Right cardiac atrium (tissue), 5 donors: ENCODE measurements at regions of chr12 and their contacts with region 1.

Region 1: DNA sequence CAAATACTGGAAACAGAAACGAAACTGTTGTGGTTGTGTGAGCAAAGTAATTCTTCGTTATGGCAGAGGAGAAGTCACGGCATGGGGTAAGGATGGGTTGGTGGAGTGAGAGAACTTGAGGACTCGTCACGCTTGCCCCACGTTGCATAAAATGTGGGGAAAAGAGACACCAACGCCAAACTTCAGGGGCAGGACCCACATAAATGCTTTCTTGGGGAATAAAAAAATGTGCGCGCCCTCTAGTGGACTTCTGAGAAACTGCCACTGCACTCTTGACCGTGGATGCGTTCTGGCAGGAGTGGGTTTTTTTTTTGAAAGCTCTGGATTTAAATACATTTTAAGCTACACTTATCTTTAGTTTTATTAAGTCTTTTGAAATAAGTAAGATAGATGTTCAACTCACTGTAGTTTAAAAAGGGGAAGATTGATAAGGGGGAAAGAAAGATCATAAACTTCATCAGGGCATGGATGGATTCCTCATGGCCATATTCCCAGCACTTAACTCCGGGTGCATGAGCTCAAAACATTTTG is 4.1 kb upstream of the IGF1 start:
- DNase-seq: peak; percentile 67 to 81 (median 69)
- ATAC-seq: peak; percentile 56 to 82
- H3K4me3 ChIP-seq: no peak overlapping the region
- H3K27ac ChIP-seq: no peak overlapping the region
- H3K4me1 ChIP-seq: no peaks in the 10 kb centered on the region
- H3K27me3 ChIP-seq: no peaks in the 10 kb centered on the region

Region 2: GRCh38 chr12:102023343-102023930 is 461.1 kb before region 1 on chr12:
- intact Hi-C with region 1: no loop called
- DNase-seq: no peak
- ATAC-seq: no peak
- H3K4me3 ChIP-seq: no peak overlapping the region
- H3K27ac ChIP-seq: no peak overlapping the region
- H3K4me1 ChIP-seq: no peaks in the 10 kb centered on the region
- H3K27me3 ChIP-seq: no peaks in the 10 kb centered on the region

Region 3: GRCh38 chr12:102169922-102170621 is 314.4 kb before region 1 on chr12:
- intact Hi-C with region 1: loop called in 3 of 4 experiments (anchors 5 to 10 kb)
- DNase-seq: no peak
- ATAC-seq: no peak
- H3K4me3 ChIP-seq: no peak overlapping the region
- H3K27ac ChIP-seq: no peak overlapping the region
- H3K4me1 ChIP-seq: no peaks in the 10 kb centered on the region
- H3K27me3 ChIP-seq: no peaks in the 10 kb centered on the region

Region 4: DNA sequence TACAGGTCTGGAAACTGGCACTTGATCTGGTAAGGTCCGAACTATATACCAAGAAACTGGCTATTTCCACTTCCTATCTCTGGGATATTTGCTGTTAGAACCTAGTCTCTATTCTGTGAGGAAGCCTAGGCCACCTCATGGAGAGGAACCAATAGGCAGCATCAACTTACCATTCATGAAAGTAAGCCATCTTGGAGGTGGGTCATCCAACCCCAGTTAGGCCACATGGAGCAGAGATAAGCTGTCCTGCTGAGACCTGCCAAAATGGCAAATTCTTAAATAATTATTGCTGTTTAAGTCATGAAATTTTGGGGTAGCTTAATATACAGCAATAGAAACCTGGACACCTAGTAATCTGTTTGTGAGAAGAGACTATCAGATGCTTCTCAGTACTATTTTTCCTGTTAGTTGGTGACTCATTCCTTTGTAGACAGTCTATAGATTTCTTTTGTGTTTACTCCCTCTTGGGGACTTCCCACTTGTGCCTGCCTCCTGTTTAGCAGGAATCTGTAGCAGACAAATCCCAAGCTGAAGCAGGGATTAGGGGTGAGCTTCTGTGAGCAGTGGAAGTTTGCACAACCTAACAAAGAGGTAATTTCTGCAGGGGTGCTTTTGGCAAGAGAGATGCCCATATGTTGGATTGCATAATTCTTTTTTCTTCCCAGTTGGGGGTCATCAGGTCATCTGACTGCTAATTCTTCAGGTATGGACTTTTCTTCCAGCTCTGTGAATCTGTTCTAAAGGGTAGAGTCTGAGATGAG is 141.0 kb before region 1 on chr12:
- intact Hi-C with region 1: no loop called
- DNase-seq: no peak
- ATAC-seq: no peak
- H3K4me3 ChIP-seq: no peak overlapping the region
- H3K27ac ChIP-seq: no peak overlapping the region
- H3K4me1 ChIP-seq: no peaks in the 10 kb centered on the region
- H3K27me3 ChIP-seq: no peaks in the 10 kb centered on the region

Region 5: DNA sequence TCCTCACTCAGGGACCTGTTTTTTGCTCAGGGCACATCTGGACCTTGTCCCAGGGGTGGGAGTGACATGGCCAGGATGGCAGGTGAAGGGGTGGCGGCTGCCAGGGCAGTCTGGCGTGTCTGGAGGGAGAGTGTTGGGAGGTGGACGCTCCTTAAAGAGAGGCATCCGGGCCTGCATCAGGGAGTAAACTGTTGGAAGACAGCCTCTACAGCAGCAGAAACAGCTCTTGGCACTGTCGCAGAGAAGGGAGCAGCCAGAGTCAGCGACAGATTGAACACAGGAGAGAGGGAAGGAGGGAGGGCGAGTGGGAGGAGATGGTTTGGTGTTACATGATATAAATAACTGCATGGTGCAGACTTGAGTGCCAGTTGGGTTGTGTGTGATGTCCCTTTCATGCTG is 57.0 kb before region 1 on chr12:
- intact Hi-C with region 1: no loop called
- DNase-seq: peak; percentile 65 to 83 (median 79)
- ATAC-seq: peak; percentile 92 to 94
- H3K4me3 ChIP-seq: no peak overlapping the region
- H3K27ac ChIP-seq: peak overlapping the region; percentile 86
- H3K4me1 ChIP-seq: peaks cover 7% of the 10 kb centered on the region
- H3K27me3 ChIP-seq: no peaks in the 10 kb centered on the region